ENCODE measurements at regions of chr9 and their contacts with region 1.

Region 1: GRCh38 chr9:20356403-20357035 is 265.8 kb downstream of the MLLT3 start:
- DNase-seq: peak; percentile 79 to 86 (median 83)
- H3K4me3 ChIP-seq: no peak overlapping the region
- H3K27ac ChIP-seq: no peak overlapping the region
- H3K4me1 ChIP-seq: peaks cover 0 to 22% (median 13%) of the 10 kb centered on the region in 4 experiments
- H3K27me3 ChIP-seq: no peaks in the 10 kb centered on the region

Region 2: DNA sequence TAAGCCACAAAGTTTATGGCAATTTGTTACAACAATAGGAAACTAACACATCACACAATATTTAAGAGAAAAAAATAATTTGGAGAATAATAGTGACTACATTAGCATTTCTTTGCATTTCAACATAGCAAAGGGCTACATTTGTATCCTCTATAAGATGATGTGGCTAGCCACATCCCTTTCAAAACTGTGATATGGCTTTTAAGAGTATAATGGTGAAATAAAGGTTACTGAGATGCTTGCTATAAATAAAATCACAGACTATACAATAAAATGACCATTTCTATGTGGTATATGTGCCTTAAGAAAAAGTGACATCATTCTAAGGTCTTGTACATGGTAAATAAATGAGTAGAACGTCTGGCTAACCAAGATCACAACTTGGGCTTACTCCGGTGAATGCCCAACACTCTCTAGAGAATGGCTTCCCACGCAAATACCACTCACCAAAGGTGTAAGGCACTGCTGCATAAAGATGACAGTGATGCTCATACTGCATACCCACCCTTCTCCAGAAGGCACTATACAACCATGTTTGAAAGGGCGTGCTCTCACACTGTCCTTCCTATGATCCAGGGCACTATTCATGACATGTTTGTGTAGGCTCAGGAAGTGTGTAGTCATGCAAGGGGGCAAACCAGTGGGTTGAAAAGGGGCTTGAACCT is 20.7 kb before region 1 on chr9:
- CTCF ChIA-PET with region 1: no interaction called
- POLR2A ChIA-PET with region 1: no interaction called
- DNase-seq: no peak
- H3K4me3 ChIP-seq: no peak overlapping the region
- H3K27ac ChIP-seq: no peak overlapping the region
- H3K4me1 ChIP-seq: peaks cover 0 to 11% (median 2%) of the 10 kb centered on the region in 4 experiments
- H3K27me3 ChIP-seq: peaks cover 0 to 13% (median 0%) of the 10 kb centered on the region in 5 experiments

Region 3: GRCh38 chr9:20407012-20407411 is 50.5 kb after region 1 on chr9:
- CTCF ChIA-PET with region 1: interaction called, 66 read pairs
- POLR2A ChIA-PET with region 1: no interaction called
- DNase-seq: peak in 1 of 3 donors; percentile 33
- H3K4me3 ChIP-seq: no peak overlapping the region
- H3K27ac ChIP-seq: no peak overlapping the region
- H3K4me1 ChIP-seq: peaks cover 6 to 38% (median 17%) of the 10 kb centered on the region in 4 experiments
- H3K27me3 ChIP-seq: no peaks in the 10 kb centered on the region

Measured in common myeloid progenitor, CD34-positive (primary cell).